ENCODE measurements at regions of chrX and their contacts with region 1.

Region 1: DNA sequence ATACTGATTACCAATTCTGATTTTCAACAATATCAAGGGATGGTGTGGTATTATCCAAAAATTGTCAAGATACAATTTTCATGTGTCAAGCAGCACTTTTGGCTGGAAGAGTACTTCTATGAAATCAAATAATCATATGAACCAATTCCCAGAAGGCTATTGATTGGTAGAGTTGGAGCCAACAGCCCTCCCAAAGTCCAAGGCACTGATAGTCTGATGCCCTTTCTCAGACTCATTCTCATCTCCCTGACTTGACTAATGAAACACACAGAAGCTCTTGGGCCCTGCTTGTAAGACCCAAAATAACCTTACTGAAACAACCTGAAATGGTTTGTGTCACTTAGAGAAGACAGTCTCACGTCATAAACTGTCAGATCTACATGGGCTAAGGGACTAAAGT is 48.9 kb downstream of the ATP11C start:
- DNase-seq: no peak

Region 2: DNA sequence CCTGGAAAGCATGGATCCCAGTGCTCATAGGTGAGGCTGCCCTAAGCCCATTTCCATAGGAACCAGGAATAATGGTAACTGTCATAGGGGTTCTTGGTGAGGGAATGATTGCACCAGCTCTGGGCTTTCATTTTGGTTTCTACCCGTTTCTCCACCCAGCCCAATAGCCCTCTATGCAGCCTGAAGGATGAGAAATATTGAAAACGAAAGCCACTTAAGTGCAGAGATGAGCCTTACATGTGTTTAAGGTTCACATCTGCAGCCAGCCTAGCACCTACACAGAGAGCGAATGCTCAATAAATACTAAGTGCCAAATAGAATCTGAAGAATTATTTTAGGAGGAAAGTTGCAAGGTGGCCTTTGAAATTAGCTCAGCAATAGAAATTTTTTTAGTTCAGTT is 236.4 kb before region 1 on chrX:
- intact Hi-C with region 1: no loop called
- DNase-seq: no peak

Region 3: DNA sequence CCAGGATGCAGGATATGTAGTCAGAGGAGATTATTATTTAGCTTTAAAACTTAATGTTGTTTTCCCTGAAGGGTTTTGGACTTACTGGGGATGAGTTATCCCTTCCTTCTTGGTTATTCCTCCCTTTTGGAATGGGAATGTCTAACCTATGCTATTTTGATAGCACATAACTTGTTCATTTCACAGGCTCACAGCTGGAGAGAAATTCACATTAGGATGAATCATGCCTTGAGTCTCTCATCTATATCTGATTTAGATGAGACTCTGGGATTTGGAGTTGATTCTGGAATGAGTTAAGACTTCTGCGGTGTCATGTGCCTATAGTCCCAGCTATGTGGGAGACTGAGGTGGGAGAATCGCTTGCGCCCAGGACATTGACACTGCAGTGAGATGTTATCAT is 32.3 kb before region 1 on chrX:
- intact Hi-C with region 1: loop called in 1 of 2 experiments (anchors 1 kb)
- DNase-seq: no peak